Activated T-helper 1 cell treated with anti-CD3 and anti-CD28 coated beads, Interleukin-12 subunit alpha, Interleukin-12 subunit beta, Interleukin-2, Interleukin-4 antibody, amounts not matched to agents 30 ng/mL and 10 ng/mL and 1 ng/mL, durations not matched to agents 14 hours and 24 hours and 36 hours (primary cell): ENCODE measurements at regions of chr2 and their contacts with region 1.

Region 1: DNA sequence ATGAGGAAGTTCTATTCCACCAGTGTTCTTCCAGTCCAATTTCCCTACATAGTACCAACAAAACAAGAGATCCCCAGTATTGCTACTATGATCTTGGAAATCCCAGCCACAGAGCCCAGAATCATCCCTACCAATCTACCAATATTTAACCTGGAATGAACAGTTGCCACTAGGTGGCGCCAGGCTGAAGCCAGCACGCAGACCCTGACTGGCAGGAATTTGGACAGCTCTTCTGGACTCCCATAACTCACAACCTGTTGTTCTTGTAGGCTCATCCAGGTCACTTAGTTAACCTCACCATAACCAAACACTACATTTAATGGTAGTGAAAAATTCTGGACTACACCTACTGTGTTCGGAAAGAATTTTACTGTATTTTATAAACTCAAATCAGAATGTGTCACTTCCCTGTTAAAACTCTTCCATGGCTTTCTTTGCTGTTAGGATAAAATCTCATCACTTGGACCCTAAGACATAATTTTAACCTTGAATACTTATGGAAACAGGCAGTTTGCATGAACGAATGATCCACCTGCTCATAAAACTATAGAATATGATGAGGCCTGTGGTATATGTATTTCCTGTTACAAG is 59.8 kb upstream of the SLC38A11 start:
- DNase-seq: peak; percentile 10
- H3K4me3 Mint-ChIP-seq: no peak overlapping the region
- H3K27ac Mint-ChIP-seq: no peak overlapping the region
- H3K4me1 Mint-ChIP-seq: no peaks in the 10 kb centered on the region
- H3K27me3 Mint-ChIP-seq: peaks cover 4% of the 10 kb centered on the region

Region 2: DNA sequence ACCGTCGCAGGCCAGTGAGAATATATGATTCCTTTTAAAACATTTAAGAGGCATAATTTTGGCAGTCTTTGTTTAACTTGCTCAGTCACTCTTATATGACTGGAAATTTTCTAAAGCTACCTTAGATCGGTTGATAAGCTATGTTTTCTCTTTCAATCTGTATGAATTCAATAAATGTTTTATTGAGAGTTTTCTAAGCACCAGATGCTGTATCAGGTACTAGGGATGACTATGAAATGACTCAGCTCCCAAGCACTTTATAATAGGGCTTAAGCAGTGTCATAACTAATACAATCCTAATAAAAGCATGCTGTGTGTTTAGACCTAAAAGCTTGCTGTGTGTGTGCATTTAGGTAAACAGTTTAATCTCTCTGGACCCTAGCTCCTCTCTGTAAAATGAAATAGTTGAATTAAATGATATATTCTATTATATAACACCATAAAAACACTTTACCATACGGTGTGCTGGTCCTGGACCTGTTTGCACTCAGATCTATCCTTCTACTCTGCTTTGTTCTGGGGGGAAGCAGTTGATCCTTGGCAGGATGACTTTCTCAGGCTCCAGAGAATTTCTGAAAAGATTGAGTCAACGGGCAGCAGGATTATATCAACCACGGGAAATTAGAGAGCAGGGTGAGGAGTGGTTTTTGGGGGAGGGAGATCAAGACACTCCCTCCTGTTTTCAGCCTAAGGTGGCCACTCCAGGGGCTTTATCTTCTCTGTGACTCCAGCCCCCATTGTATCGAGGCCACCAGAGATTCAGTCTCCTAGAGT is 33.7 kb before region 1 on chr2:
- intact Hi-C with region 1: no loop called
- DNase-seq: no peak
- H3K4me3 Mint-ChIP-seq: no peak overlapping the region
- H3K27ac Mint-ChIP-seq: no peak overlapping the region
- H3K4me1 Mint-ChIP-seq: no peaks in the 10 kb centered on the region
- H3K27me3 Mint-ChIP-seq: peaks cover 3% of the 10 kb centered on the region

Region 3: GRCh38 chr2:165203689-165204559 is 188.8 kb after region 1 on chr2 and contains the start of gene SCN3A:
- intact Hi-C with region 1: loop called (anchors 1 kb)
- DNase-seq: no peak
- H3K4me3 Mint-ChIP-seq: no peak within 1 kb of the TSS
- H3K27ac Mint-ChIP-seq: no peak within 1 kb of the TSS
- H3K4me1 Mint-ChIP-seq: no peaks in the 10 kb centered on the region
- H3K27me3 Mint-ChIP-seq: peaks cover 2% of the 10 kb centered on the region
- total RNA-seq, gene SCN3A: not detected in 2 replicates

Region 4: GRCh38 chr2:165390875-165391274 is 375.7 kb after region 1 on chr2:
- intact Hi-C with region 1: loop called (anchors 10 kb)
- DNase-seq: no peak
- H3K4me3 Mint-ChIP-seq: no peak overlapping the region
- H3K27ac Mint-ChIP-seq: no peak overlapping the region
- H3K4me1 Mint-ChIP-seq: peaks cover 18% of the 10 kb centered on the region
- H3K27me3 Mint-ChIP-seq: peaks cover 13% of the 10 kb centered on the region